ENCODE measurements at regions of chr12 and their contacts with region 1.

Region 1: GRCh38 chr12:103805961-103806360 is 35.1 kb downstream of the NT5DC3 start:
- DNase-seq: no peak
- H3K4me3 ChIP-seq: no peak overlapping the region
- H3K27ac ChIP-seq: no peak overlapping the region
- H3K4me1 ChIP-seq: no peaks in the 10 kb centered on the region
- H3K27me3 ChIP-seq: no peaks in the 10 kb centered on the region
- CTCF ChIP-seq: no peak
- POLR2A ChIP-seq: no peak

Region 2: GRCh38 chr12:103840876-103841689 is 35.1 kb after region 1 on chr12 and contains the start of gene NT5DC3:
- intact Hi-C with region 1: loop called (anchors 2 kb)
- DNase-seq: peak; percentile 85
- H3K4me3 ChIP-seq: peak within 1 kb of the TSS; percentile 63 to 78
- H3K27ac ChIP-seq: peak within 1 kb of the TSS; percentile 78 to 81
- H3K4me1 ChIP-seq: no peaks in the 10 kb centered on the region
- H3K27me3 ChIP-seq: no peaks in the 10 kb centered on the region
- CTCF ChIP-seq: peak in 1 of 4 experiments; percentile 42
- POLR2A ChIP-seq: peak; percentile 88
- total RNA-seq, gene NT5DC3: 12.4 to 29.7 TPM